Endothelial cell of umbilical vein (primary cell): ENCODE measurements at regions of chr14 and their contacts with region 1.

Region 1: GRCh38 chr14:69398053-69398817 is at the starts of genes ERH and SLC39A9:
- DNase-seq: peak; percentile 98
- H3K4me3 ChIP-seq: peak within 1 kb of the TSS; percentile 13 to 100 (median 84)
- H3K27ac ChIP-seq: peak within 1 kb of the TSS; percentile 92
- H3K4me1 ChIP-seq: peaks cover 31% of the 10 kb centered on the region
- H3K27me3 ChIP-seq: no peaks in the 10 kb centered on the region
- CTCF ChIP-seq: no peak
- POLR2A ChIP-seq: peak; percentile 84
- total RNA-seq, gene ERH: 263 and 273 TPM in 2 replicates
- total RNA-seq, gene SLC39A9: 52.1 and 55.2 TPM in 2 replicates

Region 2: DNA sequence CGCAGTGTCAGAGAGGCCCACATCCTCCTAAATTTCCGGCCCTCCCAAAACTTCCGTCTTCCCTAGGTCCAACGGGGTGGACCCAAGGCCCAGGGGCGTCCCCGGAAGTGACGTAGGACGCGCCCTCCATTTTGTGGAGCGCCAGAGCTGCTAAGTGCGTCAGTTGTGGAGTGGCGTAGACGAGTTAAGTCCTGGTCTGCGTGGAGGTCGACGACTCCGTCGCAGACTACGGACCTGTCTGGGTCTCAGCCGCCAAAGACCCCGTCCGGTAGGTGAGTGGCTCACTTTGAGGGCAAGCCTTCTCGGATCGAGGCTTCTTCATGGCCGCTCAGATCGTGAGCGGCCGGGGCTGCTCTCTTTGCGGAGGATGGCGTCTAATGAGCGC is 368.7 kb after region 1 on chr14 and contains the start of gene SRSF5:
- CTCF ChIA-PET with region 1: no interaction called
- POLR2A ChIA-PET with region 1: no interaction called
- dilution Hi-C with region 1: no loop called
- intact Hi-C with region 1: loop called (anchors 10 kb)
- DNase-seq: peak; percentile 97
- H3K4me3 ChIP-seq: peak within 1 kb of the TSS; percentile 24 to 98 (median 76)
- H3K27ac ChIP-seq: peak within 1 kb of the TSS; percentile 88
- H3K4me1 ChIP-seq: peaks cover 27% of the 10 kb centered on the region
- H3K27me3 ChIP-seq: no peaks in the 10 kb centered on the region
- CTCF ChIP-seq: no peak
- POLR2A ChIP-seq: peak; percentile 99
- total RNA-seq, gene SRSF5: 253 and 276 TPM in 2 replicates